ENCODE measurements at regions of chr19 and their contacts with region 1.

Region 1: GRCh38 chr19:7522072-7522922 is at the start of gene MCOLN1:
- DNase-seq: peak; percentile 99 to 100
- ATAC-seq: peak; percentile 92 to 98 (median 94)
- H3K4me3 ChIP-seq: peak within 1 kb of the TSS; percentile 76 to 98 (median 82)
- H3K27ac ChIP-seq: peak within 1 kb of the TSS in 9 of 10 donors; percentile 7 to 88 (median 62)
- H3K4me1 ChIP-seq: peaks cover 7 to 28% (median 20%) of the 10 kb centered on the region in 9 donors
- H3K27me3 ChIP-seq: no peaks in the 10 kb centered on the region
- CTCF ChIP-seq: no peak
- total RNA-seq, gene MCOLN1: 10.4 to 29.1 (median 13.4) TPM

Region 2: DNA sequence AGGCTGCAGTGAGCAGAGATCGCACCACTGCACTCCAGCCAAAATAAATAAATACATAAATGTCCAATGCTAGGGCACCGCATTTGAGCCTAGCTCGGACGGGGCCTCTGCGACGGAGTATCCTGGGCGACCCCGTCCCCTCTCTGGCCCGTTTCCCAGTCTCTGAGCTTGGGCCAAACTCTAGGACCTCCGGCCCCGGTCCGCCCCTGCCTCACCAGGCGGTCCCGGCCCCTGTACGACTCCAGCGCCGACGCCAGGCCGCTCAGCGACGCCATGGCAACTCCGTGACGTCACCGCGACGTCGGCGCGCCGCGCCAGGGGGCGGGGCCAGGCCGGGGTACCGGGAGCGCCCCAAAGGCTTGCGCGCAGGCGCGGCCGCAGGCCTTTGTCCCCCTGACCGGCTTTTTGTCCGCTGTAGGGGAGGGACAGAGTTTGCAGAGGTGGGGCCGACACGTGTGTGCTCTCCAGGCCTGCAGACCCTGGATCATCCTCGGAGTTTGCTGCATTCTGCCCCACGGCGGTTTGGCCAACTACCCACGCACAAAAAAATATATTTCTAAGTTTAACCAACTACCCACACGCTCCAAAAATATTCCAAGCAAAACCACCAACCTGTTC is 33.5 kb before region 1 on chr19 and contains the start of gene PEX11G:
- intact Hi-C with region 1: loop called in 2 of 10 experiments (anchors 5 kb)
- DNase-seq: peak; percentile 92 to 96
- ATAC-seq: peak; percentile 96 to 99 (median 98)
- H3K4me3 ChIP-seq: peak within 1 kb of the TSS; percentile 38 to 76 (median 64)
- H3K27ac ChIP-seq: peak within 1 kb of the TSS in 9 of 10 donors; percentile 79 to 97 (median 85)
- H3K4me1 ChIP-seq: peaks cover 0 to 45% (median 12%) of the 10 kb centered on the region in 9 donors
- H3K27me3 ChIP-seq: no peaks in the 10 kb centered on the region
- CTCF ChIP-seq: no peak
- total RNA-seq, gene PEX11G: 0.95 to 2.4 (median 1.9) TPM